ENCODE measurements at regions of chr2 and their contacts with region 1.

Region 1: DNA sequence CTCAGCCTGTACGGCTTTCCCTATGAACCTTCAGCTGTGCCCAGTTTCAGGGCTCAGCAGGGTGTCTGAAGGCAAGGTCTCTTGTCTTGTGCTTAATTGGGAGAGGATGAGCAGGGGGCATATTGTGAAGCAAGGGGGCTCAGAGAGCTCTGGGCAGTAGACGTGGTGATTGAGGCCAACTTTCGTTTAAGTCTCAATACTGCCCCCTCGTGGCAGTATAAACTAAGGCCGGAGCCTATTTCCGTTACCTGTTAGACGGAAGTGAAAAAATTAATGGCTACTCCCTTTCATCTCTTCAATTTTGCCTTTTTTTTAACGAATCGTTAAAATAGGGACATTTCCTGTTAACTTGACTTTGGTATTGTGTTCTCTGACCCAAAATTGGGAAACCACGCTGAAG is 193.4 kb downstream of the TDRD15 start:
- DNase-seq: peak in 4 of 5 donors; percentile 32 to 57 (median 42)
- ATAC-seq: peak in 3 of 4 donors; percentile 68 to 80 (median 72)
- H3K4me3 ChIP-seq: no peak overlapping the region
- H3K27ac ChIP-seq: no peak overlapping the region
- H3K4me1 ChIP-seq: peaks cover 0 to 4% (median 0%) of the 10 kb centered on the region in 12 donors
- H3K27me3 ChIP-seq: no peaks in the 10 kb centered on the region
- CTCF ChIP-seq: peak; percentile 64 to 87 (median 78)
- POLR2A ChIP-seq: no peak

Region 2: DNA sequence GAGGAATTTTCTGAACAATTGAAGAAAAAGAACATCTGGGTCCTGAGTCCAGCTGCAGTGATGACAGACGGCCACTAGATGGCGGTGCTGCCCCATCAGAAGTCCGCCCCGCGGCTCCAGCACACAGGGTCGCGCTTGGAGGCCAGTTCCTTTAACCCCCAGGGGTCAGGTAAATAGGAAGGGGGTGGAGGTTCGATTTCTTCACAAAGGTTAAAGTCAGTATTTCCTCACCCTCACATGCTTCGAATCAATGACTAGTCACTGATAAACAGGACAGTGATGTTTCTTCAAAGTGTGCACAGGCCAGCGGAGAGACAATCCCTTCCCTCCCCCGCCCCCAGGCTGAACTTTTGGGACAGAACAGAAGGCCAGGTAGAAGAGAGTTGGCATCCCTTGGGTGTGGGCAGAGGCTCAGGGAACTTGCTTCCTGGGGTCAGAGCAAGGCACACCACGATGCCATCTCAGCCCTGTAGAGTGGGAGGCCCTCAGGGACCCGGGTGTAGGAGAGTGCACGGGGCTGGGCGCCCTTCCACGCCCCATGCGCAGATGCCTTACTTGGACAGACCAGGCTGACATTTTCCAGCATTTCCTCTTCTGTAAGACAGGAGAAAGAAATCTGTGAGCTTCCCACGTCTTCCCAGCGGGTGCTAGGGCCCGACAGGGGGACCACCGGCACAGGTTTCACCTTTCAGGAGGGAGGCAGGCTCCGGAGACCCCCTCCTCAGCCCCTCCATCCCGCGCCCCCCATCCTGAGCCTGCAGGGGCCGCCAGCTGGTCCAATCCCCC is 274.0 kb before region 1 on chr2:
- intact Hi-C with region 1: loop called (anchors 2 to 10 kb)
- DNase-seq: peak; percentile 41 to 78 (median 65)
- ATAC-seq: peak; percentile 60 to 66 (median 62)
- H3K4me3 ChIP-seq: peak overlapping the region in 9 of 12 donors; percentile 10 to 46 (median 33)
- H3K27ac ChIP-seq: peak overlapping the region in 9 of 12 donors; percentile 19 to 84 (median 51)
- H3K4me1 ChIP-seq: peaks cover 0 to 21% (median 6%) of the 10 kb centered on the region in 12 donors
- H3K27me3 ChIP-seq: peaks cover 0 to 17% (median 0%) of the 10 kb centered on the region in 9 donors
- CTCF ChIP-seq: peak; percentile 97 to 100 (median 99)
- POLR2A ChIP-seq: no peak

Region 3: GRCh38 chr2:21175895-21176646 is 141.1 kb before region 1 on chr2:
- intact Hi-C with region 1: loop called (anchors 1 to 2 kb)
- DNase-seq: no peak
- ATAC-seq: peak in 3 of 4 donors; percentile 32 to 60 (median 39)
- H3K4me3 ChIP-seq: peak overlapping the region in 2 of 12 donors; percentile 8 to 9
- H3K27ac ChIP-seq: peak overlapping the region in 1 of 12 donors; percentile 25
- H3K4me1 ChIP-seq: peaks cover 0 to 7% (median 0%) of the 10 kb centered on the region in 12 donors
- H3K27me3 ChIP-seq: no peaks in the 10 kb centered on the region
- CTCF ChIP-seq: peak in 11 of 12 donors; percentile 24 to 73 (median 53)
- POLR2A ChIP-seq: no peak